ENCODE measurements at regions of chr1 and their contacts with region 1.

Region 1: DNA sequence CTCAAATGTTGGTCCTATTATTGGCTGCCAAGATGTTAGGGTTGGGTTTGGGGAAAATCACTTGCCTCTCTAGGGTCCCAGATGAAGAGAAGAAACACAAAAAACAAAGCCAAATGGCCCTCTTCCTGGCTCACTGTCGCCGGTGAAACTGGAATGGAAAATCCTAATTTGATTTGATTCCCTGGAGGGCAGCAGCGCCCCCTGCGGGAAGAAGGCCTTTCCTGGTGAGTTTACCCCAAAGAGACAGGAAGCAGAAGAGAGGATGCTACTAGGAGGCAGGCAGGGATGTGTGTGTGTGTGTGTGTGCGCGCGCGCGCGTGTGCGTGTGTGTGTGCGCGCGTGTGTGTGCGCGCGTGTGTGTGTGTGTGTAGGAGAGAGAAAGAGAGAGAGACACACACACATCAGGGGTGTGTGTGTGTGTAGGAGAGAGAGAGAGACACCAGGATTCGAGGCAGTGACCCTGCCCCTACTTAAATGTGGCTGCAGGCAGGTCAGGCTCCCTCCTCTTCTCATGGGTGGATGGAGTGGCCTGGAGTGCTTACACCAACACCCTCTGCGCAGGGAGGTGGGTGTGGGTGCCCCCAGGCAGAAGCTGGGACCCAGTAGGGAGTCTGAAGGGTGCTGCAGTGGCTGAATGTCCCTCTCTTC is 3.1 kb upstream of the SELENON start:
- DNase-seq: peak; percentile 65 to 98
- H3K4me3 ChIP-seq: no peak overlapping the region
- H3K27ac ChIP-seq: no peak overlapping the region
- H3K4me1 ChIP-seq: peaks cover 4 to 14% (median 11%) of the 10 kb centered on the region in 4 experiments; a peak in 6 of 7 replicates
- H3K27me3 ChIP-seq: peaks cover 0 to 2% (median under 1%) of the 10 kb centered on the region in 4 experiments; a peak in 3 of 7 replicates
- CTCF ChIP-seq: peak; percentile 86 to 89 (median 87)
- EP300 ChIP-seq: no peak
- POLR2A ChIP-seq: no peak
- RAD21 ChIP-seq: peak; percentile 87 to 92

Region 2: GRCh38 chr1:25619101-25619890 is 177.6 kb before region 1 on chr1:
- CTCF ChIA-PET with region 1: interaction called, 27 read pairs
- POLR2A ChIA-PET with region 1: interaction called, 5 read pairs
- DNase-seq: peak; percentile 41 to 87
- H3K4me3 ChIP-seq: no peak overlapping the region
- H3K27ac ChIP-seq: no peak overlapping the region
- H3K4me1 ChIP-seq: peaks cover 0 to 25% (median 6%) of the 10 kb centered on the region in 4 experiments; a peak in 6 of 7 replicates
- H3K27me3 ChIP-seq: peaks cover 9 to 29% (median 17%) of the 10 kb centered on the region in 4 experiments
- CTCF ChIP-seq: peak; percentile 94 to 99 (median 99)
- EP300 ChIP-seq: no peak
- POLR2A ChIP-seq: no peak
- RAD21 ChIP-seq: peak; percentile 83 to 87

Region 3: GRCh38 chr1:25748531-25749205 is 48.3 kb before region 1 on chr1:
- CTCF ChIA-PET with region 1: interaction called, 10 read pairs
- POLR2A ChIA-PET with region 1: interaction called, 3 read pairs
- DNase-seq: no peak
- H3K4me3 ChIP-seq: no peak overlapping the region
- H3K27ac ChIP-seq: peak overlapping the region; percentile 31; the same call in 1 of the 2 replicates
- H3K4me1 ChIP-seq: peaks cover 12 to 30% (median 17%) of the 10 kb centered on the region in 4 experiments
- H3K27me3 ChIP-seq: no peaks in the 10 kb centered on the region
- CTCF ChIP-seq: no peak
- EP300 ChIP-seq: no peak
- POLR2A ChIP-seq: no peak
- RAD21 ChIP-seq: no peak

Region 4: DNA sequence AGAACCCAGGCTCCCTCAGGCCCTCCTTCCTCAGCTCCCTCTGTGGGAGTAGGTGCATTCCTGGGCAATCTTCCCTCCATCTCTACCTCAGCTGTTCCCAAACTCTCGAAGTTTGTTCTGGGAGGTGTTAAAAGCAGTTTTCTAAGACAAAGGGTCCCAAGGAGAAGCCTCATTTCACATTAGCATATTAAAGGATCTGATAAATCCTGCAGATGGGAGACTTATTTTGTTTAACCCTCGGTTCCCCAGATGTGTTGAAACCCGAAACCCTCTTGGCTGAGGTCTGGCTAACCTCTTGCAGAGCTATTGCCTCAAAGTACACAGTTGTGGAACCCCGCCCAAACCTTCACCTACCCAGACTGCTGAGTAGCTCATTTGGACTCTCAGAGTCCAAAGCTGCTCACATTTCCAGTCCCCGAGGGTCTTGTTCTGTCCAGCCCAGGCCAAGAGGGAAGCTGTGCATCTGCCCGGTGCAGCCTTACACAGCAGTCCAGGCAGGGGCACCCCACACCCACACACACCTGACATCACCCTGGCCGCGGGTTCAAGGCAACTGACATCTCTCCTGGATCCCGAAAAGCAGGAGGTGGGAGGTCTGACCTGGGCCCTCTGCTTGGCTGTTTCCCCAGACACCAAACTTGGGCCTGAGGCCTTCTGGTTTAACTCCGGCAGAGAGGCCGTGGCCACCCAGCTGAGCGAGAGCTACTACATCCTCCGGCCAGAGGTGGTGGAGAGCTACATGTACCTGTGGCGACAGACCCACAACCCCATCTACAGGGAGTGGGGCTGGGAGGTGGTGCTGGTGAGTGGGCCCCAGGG is 16.4 kb before region 1 on chr1:
- CTCF ChIA-PET with region 1: interaction called, 28 read pairs
- POLR2A ChIA-PET with region 1: interaction called, 5 read pairs
- DNase-seq: peak in 1 of 2 experiments; percentile 25
- H3K4me3 ChIP-seq: peak overlapping the region in 3 of 4 experiments; percentile 0 to 26 (median 6); a peak in 2 of 8 replicates
- H3K27ac ChIP-seq: no peak overlapping the region
- H3K4me1 ChIP-seq: peaks cover 6 to 24% (median 21%) of the 10 kb centered on the region in 4 experiments
- H3K27me3 ChIP-seq: no peaks in the 10 kb centered on the region; a peak in 1 of 7 replicates
- CTCF ChIP-seq: no peak
- EP300 ChIP-seq: no peak
- POLR2A ChIP-seq: no peak
- RAD21 ChIP-seq: 0 out of 4 replicates have a peak, but pooled peaks of 1 of the 2 experiments have one; percentile 2

Measured in H1 (cell line).